ENCODE measurements at regions of chr14 and their contacts with region 1.

Region 1: GRCh38 chr14:94485944-94486841 is 10.2 kb upstream of the SERPINA9 start:
- DNase-seq: peak; percentile 70
- H3K4me3 ChIP-seq: peak overlapping the region in 2 of 3 experiments; percentile 17 to 31
- H3K27ac ChIP-seq: no peak overlapping the region
- H3K4me1 ChIP-seq: peaks cover 23% of the 10 kb centered on the region
- H3K27me3 ChIP-seq: no peaks in the 10 kb centered on the region
- CTCF ChIP-seq: peak; percentile 98 to 100

Region 2: DNA sequence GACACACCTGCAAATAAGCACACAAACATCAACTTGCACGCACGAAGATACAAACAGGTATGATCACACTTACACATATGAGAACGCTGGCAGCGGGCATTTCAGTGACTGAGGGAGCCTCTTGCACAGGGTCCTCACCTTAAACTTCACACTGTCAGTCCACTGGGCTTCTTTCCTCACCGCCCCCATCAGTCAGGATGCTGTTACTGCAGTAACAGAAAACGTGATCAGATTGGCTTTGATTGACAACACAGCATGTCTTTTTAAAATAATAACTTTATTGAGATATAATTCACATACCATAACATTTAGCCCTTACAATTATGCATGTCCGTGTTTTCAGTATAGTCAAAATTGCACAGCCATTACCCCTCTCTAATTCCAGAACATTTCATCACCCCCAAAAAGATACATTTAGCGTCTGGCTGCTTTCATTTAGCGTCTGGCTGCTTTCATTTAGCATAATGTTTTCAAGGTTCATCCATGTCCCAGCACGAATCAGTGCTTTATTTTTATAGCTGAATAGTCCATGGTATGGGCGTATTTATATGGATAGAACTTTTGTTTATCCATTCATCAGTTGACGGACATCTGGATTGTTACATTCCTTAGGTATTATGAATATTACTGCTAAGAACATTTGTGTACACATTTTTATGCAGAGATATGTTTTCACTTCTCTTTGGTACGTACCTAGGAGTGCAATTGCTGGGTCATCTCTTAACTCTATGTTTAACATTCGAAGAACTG is 480.7 kb before region 1 on chr14:
- CTCF ChIA-PET with region 1: no interaction called
- dilution Hi-C with region 1: no loop called
- in situ Hi-C with region 1: no loop called
- intact Hi-C with region 1: no loop called
- DNase-seq: no peak
- H3K4me3 ChIP-seq: no peak overlapping the region
- H3K27ac ChIP-seq: no peak overlapping the region
- H3K4me1 ChIP-seq: peaks cover 18% of the 10 kb centered on the region
- H3K27me3 ChIP-seq: no peaks in the 10 kb centered on the region
- CTCF ChIP-seq: peak; percentile 37 to 38

Region 3: GRCh38 chr14:94173885-94174603 is 312.1 kb before region 1 on chr14 and contains the start of gene PPP4R4:
- CTCF ChIA-PET with region 1: no interaction called
- dilution Hi-C with region 1: no loop called
- in situ Hi-C with region 1: no loop called
- intact Hi-C with region 1: loop called (anchors 5 kb)
- DNase-seq: peak; percentile 71
- H3K4me3 ChIP-seq: peak within 1 kb of the TSS; percentile 68 to 87 (median 70)
- H3K27ac ChIP-seq: peak within 1 kb of the TSS; percentile 45
- H3K4me1 ChIP-seq: peaks cover 45% of the 10 kb centered on the region
- H3K27me3 ChIP-seq: no peaks in the 10 kb centered on the region
- CTCF ChIP-seq: no peak
- total RNA-seq, gene PPP4R4: 6.3 to 19.3 TPM

Region 4: DNA sequence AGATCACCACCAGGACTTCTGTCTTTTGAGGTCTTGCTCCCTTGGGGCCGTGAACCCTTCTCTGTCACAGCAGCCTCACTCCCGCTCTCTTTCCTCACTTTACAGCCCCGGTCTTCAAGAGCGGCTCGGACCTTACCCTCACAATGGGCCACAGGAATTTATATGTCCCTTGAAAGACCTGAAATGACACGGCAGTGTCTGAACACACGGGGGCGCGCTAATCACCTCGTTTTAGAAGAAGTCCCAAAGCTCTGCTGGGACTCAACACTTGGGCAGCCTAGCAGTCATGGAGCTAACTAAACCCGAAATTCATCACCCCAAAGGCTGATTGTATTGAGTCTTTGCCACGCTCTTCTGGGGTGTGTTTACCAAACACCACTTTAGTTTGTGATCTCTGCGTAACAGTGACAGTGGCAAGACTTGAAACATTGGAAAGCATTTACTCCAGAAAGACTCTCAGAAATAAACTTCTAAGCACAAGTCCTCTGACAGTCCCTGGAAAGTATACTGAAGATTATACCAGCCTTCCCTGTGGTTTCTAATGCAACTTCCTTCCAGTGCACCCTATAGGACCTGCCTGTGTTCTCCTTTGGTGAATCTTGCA is 62.6 kb before region 1 on chr14:
- CTCF ChIA-PET with region 1: interaction called, 5 read pairs
- dilution Hi-C with region 1: no loop called
- in situ Hi-C with region 1: no loop called
- intact Hi-C with region 1: loop called (anchors 1 kb)
- DNase-seq: peak; percentile 37
- H3K4me3 ChIP-seq: no peak overlapping the region
- H3K27ac ChIP-seq: no peak overlapping the region
- H3K4me1 ChIP-seq: peaks cover 15% of the 10 kb centered on the region
- H3K27me3 ChIP-seq: no peaks in the 10 kb centered on the region
- CTCF ChIP-seq: peak; percentile 71 to 78

Region 5: GRCh38 chr14:94439453-94440057 is 46.6 kb before region 1 on chr14:
- CTCF ChIA-PET with region 1: interaction called, 3 read pairs
- dilution Hi-C with region 1: no loop called
- in situ Hi-C with region 1: loop called (anchors 10 kb)
- intact Hi-C with region 1: loop called (anchors 1 kb)
- DNase-seq: no peak
- H3K4me3 ChIP-seq: no peak overlapping the region
- H3K27ac ChIP-seq: no peak overlapping the region
- H3K4me1 ChIP-seq: no peaks in the 10 kb centered on the region
- H3K27me3 ChIP-seq: no peaks in the 10 kb centered on the region
- CTCF ChIP-seq: peak in 1 of 2 donors; percentile 3

Region 6: GRCh38 chr14:94451091-94451771 is 35.0 kb before region 1 on chr14:
- CTCF ChIA-PET with region 1: no interaction called
- dilution Hi-C with region 1: no loop called
- in situ Hi-C with region 1: no loop called
- intact Hi-C with region 1: no loop called
- DNase-seq: no peak
- H3K4me3 ChIP-seq: no peak overlapping the region
- H3K27ac ChIP-seq: no peak overlapping the region
- H3K4me1 ChIP-seq: peaks cover 8% of the 10 kb centered on the region
- H3K27me3 ChIP-seq: no peaks in the 10 kb centered on the region
- CTCF ChIP-seq: no peak

Region 7: DNA sequence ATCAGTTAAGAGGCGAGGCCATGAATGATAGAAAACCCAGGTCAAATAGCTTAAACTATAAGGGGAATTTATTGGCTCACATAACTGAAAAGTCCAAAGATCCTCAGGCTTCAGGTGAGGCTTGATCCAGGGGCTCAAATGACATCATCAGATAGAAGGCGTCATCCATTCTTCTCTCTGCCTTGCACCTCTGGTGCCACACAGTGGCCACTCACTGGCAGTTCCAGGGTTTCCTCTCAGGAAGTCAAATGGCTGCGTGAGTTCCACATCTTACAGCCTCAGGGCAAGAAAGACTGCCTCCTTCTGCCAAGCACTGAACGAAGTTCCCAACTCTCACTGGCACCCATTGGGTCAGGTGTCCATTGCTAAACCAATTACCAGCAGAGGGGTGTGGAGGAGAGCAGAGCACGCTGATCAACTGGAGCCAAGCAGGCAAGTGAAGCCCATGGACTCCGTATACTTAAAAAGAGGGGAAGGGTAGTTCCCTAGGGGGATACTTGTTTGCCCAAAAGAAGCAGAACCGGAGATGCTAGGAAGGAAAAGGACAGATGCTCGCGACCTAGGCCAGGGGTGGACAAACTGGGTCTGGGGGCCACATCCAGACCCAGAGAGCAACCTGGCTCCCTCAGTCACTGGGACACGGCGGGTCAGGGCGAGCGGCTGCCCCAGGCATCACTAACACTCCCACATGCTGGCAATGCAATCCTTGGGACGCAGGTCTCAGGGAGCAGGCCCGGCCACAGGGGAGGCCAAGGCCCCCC is 195.3 kb after region 1 on chr14:
- CTCF ChIA-PET with region 1: no interaction called
- dilution Hi-C with region 1: no loop called
- in situ Hi-C with region 1: no loop called
- intact Hi-C with region 1: loop called (anchors 1 kb)
- DNase-seq: peak; percentile 64
- H3K4me3 ChIP-seq: no peak overlapping the region
- H3K27ac ChIP-seq: no peak overlapping the region
- H3K4me1 ChIP-seq: peaks cover 10% of the 10 kb centered on the region
- H3K27me3 ChIP-seq: no peaks in the 10 kb centered on the region
- CTCF ChIP-seq: peak; percentile 79 to 91

Region 8: DNA sequence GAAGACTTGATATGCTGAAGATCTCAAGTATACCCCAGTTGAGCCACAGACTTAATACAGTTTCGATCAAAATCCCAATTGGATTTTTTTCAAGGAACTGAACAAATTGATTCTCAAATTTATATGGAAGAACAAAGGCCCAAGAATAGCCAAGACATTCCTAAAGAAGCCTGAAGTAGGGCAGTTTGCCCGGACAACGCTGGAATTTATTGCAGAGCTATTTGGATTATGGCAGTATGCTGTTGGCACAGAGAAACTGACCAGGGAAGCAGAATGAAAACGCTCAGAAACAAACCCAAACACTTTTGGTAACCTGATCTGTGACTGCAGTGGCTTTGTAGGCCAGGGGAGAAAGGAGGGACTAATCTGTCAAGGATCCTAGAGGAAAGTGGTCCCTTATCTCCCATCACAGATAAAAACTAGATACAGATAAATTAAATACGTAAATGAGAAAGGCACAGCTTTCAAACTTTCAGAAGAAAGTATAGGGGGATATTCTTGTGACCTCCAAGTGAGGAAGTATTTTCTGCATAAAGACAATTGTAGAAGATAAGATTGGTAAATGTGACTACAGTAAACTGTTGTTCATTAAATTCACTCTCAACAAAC is 319.6 kb after region 1 on chr14:
- CTCF ChIA-PET with region 1: no interaction called
- dilution Hi-C with region 1: no loop called
- in situ Hi-C with region 1: no loop called
- intact Hi-C with region 1: no loop called
- DNase-seq: no peak
- H3K4me3 ChIP-seq: no peak overlapping the region
- H3K27ac ChIP-seq: no peak overlapping the region
- H3K4me1 ChIP-seq: no peaks in the 10 kb centered on the region
- H3K27me3 ChIP-seq: no peaks in the 10 kb centered on the region
- CTCF ChIP-seq: no peak

Measured in mammary epithelial cell (primary cell).